A673 (cell line): ENCODE measurements at regions of chr19 and their contacts with region 1.

Region 1: DNA sequence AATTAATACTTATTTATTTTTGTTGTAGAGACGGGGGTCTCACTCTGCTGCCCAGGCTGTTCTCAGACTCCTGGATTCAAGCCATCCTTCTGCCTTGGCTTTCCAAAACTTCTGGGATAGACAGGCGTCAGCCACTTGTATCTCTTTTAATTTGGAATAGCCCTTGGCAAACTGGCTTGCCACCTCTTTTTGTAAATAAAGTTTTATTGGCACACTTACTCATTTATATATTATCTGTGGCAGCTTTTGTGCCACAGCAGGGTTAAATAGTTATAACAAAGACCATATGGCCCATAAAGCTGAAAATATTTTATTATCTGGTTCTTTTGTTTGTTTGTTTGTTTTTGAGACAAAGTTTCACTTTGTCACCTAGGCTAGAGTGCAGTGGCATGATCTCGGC is 30.5 kb downstream of the BBC3 start:
- DNase-seq: no peak
- H3K4me3 ChIP-seq: no peak overlapping the region
- H3K27ac ChIP-seq: no peak overlapping the region
- H3K4me1 ChIP-seq: no peaks in the 10 kb centered on the region
- H3K27me3 ChIP-seq: no peaks in the 10 kb centered on the region
- CTCF ChIP-seq: no peak

Region 2: DNA sequence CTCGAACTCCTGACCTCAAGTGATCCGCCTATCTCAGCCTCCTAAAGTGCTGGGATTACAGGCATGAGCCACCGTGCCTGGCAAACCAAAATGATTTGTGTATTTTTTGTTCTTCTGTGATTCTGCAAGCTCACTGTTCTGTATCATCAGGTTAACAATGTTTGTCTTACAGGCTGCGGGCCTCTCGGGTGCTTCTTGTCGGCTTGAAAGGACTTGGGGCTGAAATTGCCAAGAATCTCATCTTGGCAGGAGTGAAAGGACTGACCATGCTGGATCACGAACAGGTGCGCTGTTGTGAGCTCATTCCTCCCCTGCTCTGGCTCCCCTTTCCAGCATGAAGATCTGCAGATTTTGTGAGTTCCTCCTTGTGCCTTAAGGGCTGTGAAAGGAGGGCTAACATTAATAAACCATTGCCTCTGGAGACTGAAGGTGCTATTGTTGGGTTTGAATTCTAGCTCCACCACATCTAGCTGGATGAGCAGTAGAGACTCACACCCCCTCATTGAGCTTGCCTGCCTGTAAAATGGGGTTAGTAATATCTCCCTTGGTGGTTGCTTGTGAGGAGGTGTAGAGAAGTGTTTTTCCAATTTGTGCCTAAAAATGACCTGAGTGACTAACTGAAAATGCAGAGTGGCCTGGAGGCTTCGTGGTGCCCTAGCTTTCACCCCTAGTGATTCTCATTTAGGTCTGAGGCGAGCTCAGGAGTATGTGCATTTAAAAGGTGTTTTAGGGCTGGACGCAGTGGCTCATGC is 57.0 kb before region 1 on chr19:
- CTCF ChIA-PET with region 1: interaction called, 17 read pairs
- POLR2A ChIA-PET with region 1: no interaction called
- intact Hi-C with region 1: no loop called
- DNase-seq: no peak
- H3K4me3 ChIP-seq: no peak overlapping the region
- H3K27ac ChIP-seq: no peak overlapping the region
- H3K4me1 ChIP-seq: peaks cover 9% of the 10 kb centered on the region
- H3K27me3 ChIP-seq: no peaks in the 10 kb centered on the region
- CTCF ChIP-seq: no peak